ENCODE measurements at regions of chr2 and their contacts with region 1.

Region 1: DNA sequence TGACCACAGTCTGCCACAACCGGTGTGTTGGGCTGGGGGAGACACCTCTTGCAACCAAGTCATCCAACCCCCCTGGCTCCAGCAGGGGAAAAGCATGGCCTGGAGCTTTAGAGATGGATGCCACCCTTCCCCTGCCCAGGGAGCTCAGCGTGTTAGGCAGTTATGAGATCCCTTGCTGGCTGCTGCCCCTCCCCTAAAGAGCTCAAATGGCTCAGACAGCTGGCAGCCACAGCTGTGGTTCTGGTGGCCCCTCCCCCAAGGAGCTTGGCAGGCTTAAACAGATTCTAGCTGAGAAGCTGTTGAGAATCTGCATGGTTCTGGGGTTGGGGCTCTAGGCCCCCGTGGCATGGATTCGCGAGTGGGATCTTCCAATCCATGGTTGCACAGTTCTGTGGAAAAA is 64.7 kb downstream of the TEX51 start:
- DNase-seq: no peak
- H3K4me3 ChIP-seq: no peak overlapping the region
- H3K27ac ChIP-seq: no peak overlapping the region
- H3K4me1 ChIP-seq: no peaks in the 10 kb centered on the region
- H3K27me3 ChIP-seq: no peaks in the 10 kb centered on the region
- CTCF ChIP-seq: no peak
- EP300 ChIP-seq: no peak
- POLR2A ChIP-seq: no peak

Region 2: GRCh38 chr2:126982935-126983334 is 19.5 kb after region 1 on chr2:
- in situ Hi-C with region 1: no loop called
- intact Hi-C with region 1: loop called (anchors 2 kb)
- DNase-seq: no peak
- H3K4me3 ChIP-seq: no peak overlapping the region
- H3K27ac ChIP-seq: no peak overlapping the region
- H3K4me1 ChIP-seq: peaks cover 0 to 5% (median 0%) of the 10 kb centered on the region in 4 donors
- H3K27me3 ChIP-seq: no peaks in the 10 kb centered on the region
- CTCF ChIP-seq: no peak
- EP300 ChIP-seq: no peak
- POLR2A ChIP-seq: no peak

Measured in transverse colon (tissue), 4 donors.